ENCODE measurements at regions of chr9 and their contacts with region 1.

Region 1: DNA sequence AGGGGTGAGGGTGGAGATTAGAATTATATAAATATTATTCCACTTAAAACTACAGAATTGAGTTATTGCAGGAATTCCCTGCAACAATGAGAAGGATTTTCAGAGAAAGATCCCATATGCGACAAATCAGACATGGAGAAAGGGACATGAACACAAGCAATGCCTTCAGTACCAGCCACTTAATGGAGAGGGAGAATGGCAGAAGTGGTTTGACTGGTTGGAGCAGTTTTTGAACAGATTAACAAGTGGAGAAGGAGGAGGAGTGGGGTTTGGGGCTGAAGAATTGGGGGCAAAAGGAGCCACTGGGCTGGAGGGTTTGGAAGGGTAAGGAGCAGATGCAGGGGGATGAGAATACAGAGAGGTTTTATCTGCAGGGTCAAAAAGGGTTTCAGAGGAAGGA is 620.9 kb upstream of the PTPRD start:
- DNase-seq: no peak
- ATAC-seq: no peak
- H3K4me3 ChIP-seq: no peak overlapping the region
- H3K4me3 Mint-ChIP-seq: no peak overlapping the region
- H3K27ac ChIP-seq: no peak overlapping the region
- H3K27ac Mint-ChIP-seq: no peak overlapping the region
- H3K4me1 ChIP-seq: no peaks in the 10 kb centered on the region
- H3K4me1 Mint-ChIP-seq: no peaks in the 10 kb centered on the region
- H3K27me3 ChIP-seq: no peaks in the 10 kb centered on the region
- H3K27me3 Mint-ChIP-seq: no peaks in the 10 kb centered on the region
- CTCF ChIP-seq: no peak

Region 2: DNA sequence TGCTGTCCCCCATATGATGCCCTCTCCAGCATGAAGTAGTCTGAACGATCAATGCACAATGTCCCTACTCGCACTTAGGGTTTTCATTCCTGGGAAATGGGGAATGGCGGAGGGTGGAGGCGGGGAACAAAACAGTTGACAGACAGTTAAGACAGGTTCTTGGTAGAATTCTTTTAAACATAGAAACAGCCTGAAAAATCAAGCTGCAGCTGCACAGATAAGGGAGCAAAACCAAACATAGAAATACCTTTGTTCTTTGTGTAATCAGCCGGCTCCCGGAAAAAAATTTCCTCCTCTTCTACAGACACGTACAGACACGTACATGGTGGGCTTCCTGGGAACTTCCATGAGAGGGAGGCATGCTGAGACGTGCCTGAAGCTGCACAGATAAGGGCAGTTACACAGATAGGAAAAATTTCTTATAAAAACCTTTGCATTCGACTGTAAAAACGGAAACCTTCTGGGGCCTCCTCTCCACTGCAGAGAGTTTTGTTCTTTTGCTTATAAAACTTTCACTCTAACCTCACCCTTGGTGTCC is 41.5 kb after region 1 on chr9:
- CTCF ChIA-PET with region 1: no interaction called
- POLR2A ChIA-PET with region 1: no interaction called
- intact Hi-C with region 1: loop called in 1 of 2 experiments (anchors 5 kb)
- DNase-seq: no peak
- ATAC-seq: no peak
- H3K4me3 ChIP-seq: no peak overlapping the region
- H3K4me3 Mint-ChIP-seq: no peak overlapping the region
- H3K27ac ChIP-seq: no peak overlapping the region
- H3K27ac Mint-ChIP-seq: no peak overlapping the region
- H3K4me1 ChIP-seq: no peaks in the 10 kb centered on the region
- H3K4me1 Mint-ChIP-seq: no peaks in the 10 kb centered on the region
- H3K27me3 ChIP-seq: no peaks in the 10 kb centered on the region
- H3K27me3 Mint-ChIP-seq: no peaks in the 10 kb centered on the region
- CTCF ChIP-seq: no peak